ENCODE measurements at regions of chr12 and their contacts with region 1.

Region 1: GRCh38 chr12:45388545-45388944 is 172.7 kb downstream of the ANO6 start:
- DNase-seq: peak; percentile 30
- H3K4me3 ChIP-seq: no peak overlapping the region
- H3K27ac ChIP-seq: no peak overlapping the region
- H3K27me3 ChIP-seq: no peaks in the 10 kb centered on the region
- CTCF ChIP-seq: peak; percentile 90

Region 2: GRCh38 chr12:44960856-44961255 is 427.7 kb before region 1 on chr12:
- CTCF ChIA-PET with region 1: no interaction called
- POLR2A ChIA-PET with region 1: no interaction called
- DNase-seq: no peak
- H3K4me3 ChIP-seq: no peak overlapping the region
- H3K27ac ChIP-seq: no peak overlapping the region
- H3K27me3 ChIP-seq: no peaks in the 10 kb centered on the region
- CTCF ChIP-seq: no peak

Region 3: DNA sequence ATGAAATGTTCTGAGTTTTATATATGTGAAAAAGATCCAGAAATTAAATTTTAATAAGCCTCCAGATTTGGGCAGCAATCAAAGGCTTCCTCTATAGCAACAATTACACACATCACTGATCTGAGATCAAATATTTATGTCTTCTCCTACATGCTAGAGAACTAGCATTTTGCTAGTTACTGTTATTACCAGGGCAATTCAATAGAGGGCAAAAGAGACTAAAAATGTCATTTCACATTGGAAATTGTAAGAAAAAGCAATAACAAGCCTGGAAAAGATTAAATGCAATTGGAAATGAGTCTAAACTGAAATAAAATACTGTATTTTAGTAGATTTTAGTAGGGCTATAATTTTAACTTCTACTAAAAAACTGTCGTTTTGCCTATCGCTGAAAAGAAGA is 205.3 kb before region 1 on chr12:
- CTCF ChIA-PET with region 1: interaction called, 53 read pairs
- POLR2A ChIA-PET with region 1: no interaction called
- DNase-seq: no peak
- H3K4me3 ChIP-seq: no peak overlapping the region
- H3K27ac ChIP-seq: no peak overlapping the region
- H3K27me3 ChIP-seq: no peaks in the 10 kb centered on the region
- CTCF ChIP-seq: peak; percentile 58

Region 4: DNA sequence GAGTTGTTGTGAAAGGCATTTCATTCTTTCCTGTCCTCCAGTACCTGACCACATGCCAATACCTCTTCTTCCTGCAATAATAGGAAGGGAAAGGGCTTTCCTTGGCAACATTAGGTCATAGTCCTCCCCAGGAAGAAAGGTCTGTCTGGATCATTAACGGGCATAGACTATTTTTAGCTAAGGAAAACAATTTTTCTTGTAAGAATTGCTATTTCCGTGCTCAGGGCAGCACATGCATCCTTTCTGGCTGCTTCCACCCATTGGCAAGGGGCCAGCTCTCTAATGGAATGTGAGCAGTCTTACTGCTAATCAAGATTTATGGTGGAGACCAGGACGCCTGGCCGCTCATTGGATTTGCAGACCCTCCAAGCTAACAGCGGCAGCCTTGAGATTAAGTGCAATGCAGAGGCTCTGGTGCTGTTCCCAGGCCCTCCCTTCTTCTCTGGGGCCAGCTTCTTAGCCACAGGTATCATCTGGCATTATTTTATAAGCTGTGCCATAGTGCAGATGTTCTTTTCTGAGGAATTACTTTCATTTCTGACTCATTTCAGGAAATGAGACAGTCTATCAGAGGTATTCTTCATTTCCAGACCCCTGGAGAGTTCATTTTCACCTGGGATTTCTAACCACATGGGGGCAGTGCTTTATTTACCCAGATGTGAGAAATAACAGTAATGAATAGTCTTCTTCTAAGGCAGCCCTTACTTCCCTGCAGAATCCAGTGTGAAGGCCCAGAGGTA is 119.7 kb before region 1 on chr12:
- CTCF ChIA-PET with region 1: interaction called, 34 read pairs
- POLR2A ChIA-PET with region 1: no interaction called
- DNase-seq: peak; percentile 61
- H3K4me3 ChIP-seq: peak overlapping the region; percentile 15; the same call in 1 of the 2 replicates
- H3K27ac ChIP-seq: peak overlapping the region; percentile 55
- H3K27me3 ChIP-seq: no peaks in the 10 kb centered on the region
- CTCF ChIP-seq: peak; percentile 58

Region 5: DNA sequence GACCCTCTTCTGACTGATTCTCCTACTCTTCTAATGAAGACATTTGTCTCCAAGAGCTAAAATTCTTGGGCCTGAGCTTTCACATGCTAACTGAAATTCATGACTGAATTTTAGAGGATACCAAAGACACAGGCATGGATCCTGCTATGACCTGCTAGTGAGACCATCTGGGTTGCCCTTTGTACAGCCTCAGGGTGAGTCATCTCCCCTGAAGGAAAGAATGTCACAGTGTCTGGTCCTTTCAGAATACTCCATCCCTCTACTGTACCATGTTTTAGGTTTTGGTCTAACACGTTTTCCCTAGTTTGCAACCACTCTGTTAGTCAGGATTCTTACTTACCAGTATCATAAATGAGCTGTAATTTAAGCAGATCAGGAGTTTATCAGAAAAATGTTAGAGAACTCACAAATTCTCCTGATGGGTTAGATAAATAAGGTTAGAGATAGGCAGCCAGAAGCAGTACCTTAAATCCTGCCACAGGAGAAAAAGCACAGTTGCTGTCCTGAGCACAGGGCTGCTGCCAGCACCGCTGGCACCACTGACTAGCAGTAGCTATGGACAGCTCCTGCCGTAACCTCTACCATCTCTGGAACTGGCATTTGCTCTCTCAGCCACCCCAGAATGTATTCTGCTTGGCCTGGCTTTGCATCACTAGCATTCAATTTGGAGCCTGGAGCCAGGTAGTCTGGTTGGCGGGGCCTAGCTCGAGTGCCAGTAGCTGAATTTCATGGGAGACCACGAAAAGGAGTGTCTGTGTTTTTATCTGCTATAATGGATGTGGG is 45.1 kb before region 1 on chr12:
- CTCF ChIA-PET with region 1: interaction called, 14 read pairs
- POLR2A ChIA-PET with region 1: no interaction called
- DNase-seq: no peak
- H3K4me3 ChIP-seq: no peak overlapping the region
- H3K27ac ChIP-seq: no peak overlapping the region
- H3K27me3 ChIP-seq: no peaks in the 10 kb centered on the region
- CTCF ChIP-seq: no peak

Region 6: DNA sequence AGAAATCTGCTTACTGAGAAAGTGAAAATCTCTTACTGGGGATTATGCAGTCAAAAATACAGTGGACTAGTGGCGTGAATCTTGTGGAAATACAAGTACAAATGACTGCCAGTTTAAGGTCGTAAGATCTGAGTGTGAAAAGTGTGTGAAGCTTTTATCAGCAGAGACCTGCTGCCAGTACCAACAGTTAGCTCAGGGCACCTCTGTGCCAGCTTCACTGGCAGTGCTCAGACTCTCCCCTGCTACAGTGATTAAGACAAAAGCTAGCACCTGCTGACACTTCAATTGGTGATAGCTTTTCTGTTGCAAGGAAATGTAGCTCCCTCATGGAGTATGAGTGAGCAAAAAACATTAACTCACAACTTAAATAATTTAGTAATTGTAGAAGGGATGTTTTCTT is 12.4 kb after region 1 on chr12:
- CTCF ChIA-PET with region 1: interaction called, 22 read pairs
- POLR2A ChIA-PET with region 1: no interaction called
- DNase-seq: no peak
- H3K4me3 ChIP-seq: no peak overlapping the region
- H3K27ac ChIP-seq: no peak overlapping the region
- H3K27me3 ChIP-seq: no peaks in the 10 kb centered on the region
- CTCF ChIP-seq: no peak